ENCODE measurements at regions of chr4 and their contacts with region 1.

Region 1: GRCh38 chr4:102826890-102827673 is at the start of gene UBE2D3:
- DNase-seq: peak; percentile 92 to 97 (median 95)
- ATAC-seq: peak; percentile 72
- H3K4me3 ChIP-seq: peak within 1 kb of the TSS; percentile 82
- H3K4me3 Mint-ChIP-seq: no peak within 1 kb of the TSS
- H3K27ac ChIP-seq: peak within 1 kb of the TSS; percentile 99
- H3K27ac Mint-ChIP-seq: no peak within 1 kb of the TSS
- H3K4me1 ChIP-seq: peaks cover 19 to 24% of the 10 kb centered on the region in 2 donors
- H3K4me1 Mint-ChIP-seq: peaks cover 24 to 46% (median 40%) of the 10 kb centered on the region in 7 donors
- H3K27me3 ChIP-seq: no peaks in the 10 kb centered on the region
- H3K27me3 Mint-ChIP-seq: peaks cover 0 to 2% (median 0%) of the 10 kb centered on the region in 5 donors
- total RNA-seq, gene UBE2D3: 339 to 556 (median 413) TPM

Region 2: GRCh38 chr4:102430461-102430910 is 396.6 kb before region 1 on chr4:
- CTCF ChIA-PET with region 1: interaction called, 5 read pairs
- POLR2A ChIA-PET with region 1: interaction called, 8 read pairs
- intact Hi-C with region 1: loop called (anchors 1 to 2 kb)
- DNase-seq: no peak
- ATAC-seq: no peak
- H3K4me3 ChIP-seq: peak overlapping the region; percentile 72
- H3K4me3 Mint-ChIP-seq: peak overlapping the region; percentile 75 to 92 (median 88)
- H3K27ac ChIP-seq: peak overlapping the region; percentile 67
- H3K27ac Mint-ChIP-seq: peak overlapping the region in 8 of 9 donors; percentile 26 to 92 (median 80)
- H3K4me1 ChIP-seq: no peaks in the 10 kb centered on the region
- H3K4me1 Mint-ChIP-seq: peaks cover 0 to 19% (median 5%) of the 10 kb centered on the region in 7 donors
- H3K27me3 ChIP-seq: no peaks in the 10 kb centered on the region
- H3K27me3 Mint-ChIP-seq: peaks cover 0 to 16% (median 0%) of the 10 kb centered on the region in 5 donors

Region 3: DNA sequence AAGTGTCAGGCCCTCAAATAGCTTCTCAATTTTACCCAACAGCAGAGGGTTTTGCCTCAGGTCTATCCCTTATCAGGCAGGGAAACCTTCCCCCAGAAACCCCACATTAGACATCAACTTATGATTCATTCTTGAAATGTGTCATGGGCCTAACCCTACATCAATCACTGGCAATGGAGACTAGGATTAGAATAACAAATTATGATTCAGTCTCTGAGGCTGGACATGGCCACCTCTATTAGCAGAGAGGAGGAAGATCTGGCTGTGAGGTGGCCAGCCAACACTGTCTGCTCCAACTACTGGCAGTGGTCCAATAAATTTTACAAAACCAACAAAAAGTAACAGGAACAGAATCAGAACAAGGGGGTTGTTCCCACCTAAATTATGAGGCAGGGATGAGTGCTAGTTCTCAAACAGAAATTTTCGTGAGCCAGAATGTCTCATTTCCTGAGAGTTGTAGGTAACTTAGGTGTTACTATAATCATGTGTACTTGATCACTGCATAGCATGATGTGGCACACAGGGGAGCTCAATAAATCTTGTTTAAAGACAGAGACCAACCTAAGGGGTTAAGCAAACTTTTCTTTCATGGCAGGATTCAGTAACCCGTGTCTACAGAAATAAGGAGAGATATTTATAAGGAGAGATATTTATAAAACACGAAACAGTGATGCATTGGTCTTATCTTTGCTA is 199.1 kb before region 1 on chr4:
- CTCF ChIA-PET with region 1: interaction called, 5 read pairs
- POLR2A ChIA-PET with region 1: interaction called, 62 read pairs
- intact Hi-C with region 1: loop called in 1 of 2 experiments (anchors 1 kb)
- DNase-seq: no peak
- ATAC-seq: no peak
- H3K4me3 ChIP-seq: no peak overlapping the region
- H3K4me3 Mint-ChIP-seq: peak overlapping the region in 4 of 10 donors; percentile 16 to 92 (median 58)
- H3K27ac ChIP-seq: no peak overlapping the region
- H3K27ac Mint-ChIP-seq: peak overlapping the region in 7 of 9 donors; percentile 15 to 100 (median 87)
- H3K4me1 ChIP-seq: peaks cover 29 to 42% of the 10 kb centered on the region in 2 donors
- H3K4me1 Mint-ChIP-seq: peaks cover 29 to 91% (median 65%) of the 10 kb centered on the region in 7 donors
- H3K27me3 ChIP-seq: no peaks in the 10 kb centered on the region
- H3K27me3 Mint-ChIP-seq: no peaks in the 10 kb centered on the region

Region 4: DNA sequence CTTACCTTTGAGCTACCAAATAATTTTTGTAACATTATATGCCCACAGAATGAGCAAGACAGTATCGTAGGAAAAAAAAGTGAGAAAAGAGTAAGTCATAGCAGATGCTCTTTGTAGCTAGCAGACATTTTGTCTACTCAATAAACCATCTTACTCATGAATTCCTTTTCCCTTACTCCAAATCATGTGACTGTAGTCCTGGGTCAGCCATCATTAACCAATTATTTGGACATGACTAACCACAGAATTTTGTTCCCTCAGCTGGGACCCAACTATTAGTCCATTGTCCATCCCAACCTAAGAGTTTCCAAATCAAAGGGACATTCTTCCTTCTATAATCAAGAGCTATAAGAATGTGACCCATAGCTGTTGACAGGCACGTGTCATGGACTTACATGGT is 11.1 kb before region 1 on chr4:
- CTCF ChIA-PET with region 1: interaction called, 6 read pairs
- POLR2A ChIA-PET with region 1: interaction called, 80 read pairs
- intact Hi-C with region 1: loop called (anchors 1 kb)
- DNase-seq: no peak
- ATAC-seq: no peak
- H3K4me3 ChIP-seq: no peak overlapping the region
- H3K4me3 Mint-ChIP-seq: peak overlapping the region in 6 of 10 donors; percentile 39 to 79 (median 70)
- H3K27ac ChIP-seq: peak overlapping the region; percentile 9
- H3K27ac Mint-ChIP-seq: peak overlapping the region in 7 of 9 donors; percentile 61 to 84 (median 69)
- H3K4me1 ChIP-seq: peaks cover 77 to 81% of the 10 kb centered on the region in 2 donors
- H3K4me1 Mint-ChIP-seq: peaks cover 77 to 94% (median 91%) of the 10 kb centered on the region in 7 donors
- H3K27me3 ChIP-seq: no peaks in the 10 kb centered on the region
- H3K27me3 Mint-ChIP-seq: no peaks in the 10 kb centered on the region

Region 5: GRCh38 chr4:102901804-102902203 is 74.7 kb after region 1 on chr4:
- CTCF ChIA-PET with region 1: no interaction called
- POLR2A ChIA-PET with region 1: no interaction called
- intact Hi-C with region 1: no loop called
- DNase-seq: no peak
- ATAC-seq: no peak
- H3K4me3 ChIP-seq: no peak overlapping the region
- H3K4me3 Mint-ChIP-seq: no peak overlapping the region
- H3K27ac ChIP-seq: no peak overlapping the region
- H3K27ac Mint-ChIP-seq: no peak overlapping the region
- H3K4me1 ChIP-seq: no peaks in the 10 kb centered on the region
- H3K4me1 Mint-ChIP-seq: no peaks in the 10 kb centered on the region
- H3K27me3 ChIP-seq: no peaks in the 10 kb centered on the region
- H3K27me3 Mint-ChIP-seq: no peaks in the 10 kb centered on the region

Region 6: GRCh38 chr4:103008875-103009729 is 182.0 kb after region 1 on chr4:
- CTCF ChIA-PET with region 1: interaction called, 3 read pairs
- POLR2A ChIA-PET with region 1: interaction called, 3 read pairs
- intact Hi-C with region 1: loop called (anchors 1 to 2 kb)
- DNase-seq: peak in 7 of 9 donors; percentile 39 to 67 (median 56)
- ATAC-seq: peak; percentile 93
- H3K4me3 ChIP-seq: no peak overlapping the region
- H3K4me3 Mint-ChIP-seq: no peak overlapping the region
- H3K27ac ChIP-seq: no peak overlapping the region
- H3K27ac Mint-ChIP-seq: no peak overlapping the region
- H3K4me1 ChIP-seq: no peaks in the 10 kb centered on the region
- H3K4me1 Mint-ChIP-seq: peaks cover 0 to 3% (median 0%) of the 10 kb centered on the region in 7 donors
- H3K27me3 ChIP-seq: no peaks in the 10 kb centered on the region
- H3K27me3 Mint-ChIP-seq: peaks cover 0 to 14% (median 0%) of the 10 kb centered on the region in 5 donors

Region 7: GRCh38 chr4:103099691-103100392 is 272.8 kb after region 1 on chr4 and contains the start of gene BDH2:
- CTCF ChIA-PET with region 1: no interaction called
- POLR2A ChIA-PET with region 1: interaction called, 4 read pairs
- intact Hi-C with region 1: loop called (anchors 1 to 2 kb)
- DNase-seq: peak in 7 of 9 donors; percentile 72 to 86 (median 83)
- ATAC-seq: peak; percentile 100
- H3K4me3 ChIP-seq: peak within 1 kb of the TSS; percentile 62
- H3K4me3 Mint-ChIP-seq: peak within 1 kb of the TSS; percentile 88 to 100 (median 94)
- H3K27ac ChIP-seq: peak within 1 kb of the TSS; percentile 69
- H3K27ac Mint-ChIP-seq: peak within 1 kb of the TSS; percentile 81 to 95 (median 92)
- H3K4me1 ChIP-seq: peaks cover 4 to 11% of the 10 kb centered on the region in 2 donors
- H3K4me1 Mint-ChIP-seq: peaks cover 22 to 45% (median 34%) of the 10 kb centered on the region in 7 donors
- H3K27me3 ChIP-seq: no peaks in the 10 kb centered on the region
- H3K27me3 Mint-ChIP-seq: no peaks in the 10 kb centered on the region
- total RNA-seq, gene BDH2: 8.4 to 21.9 (median 18.5) TPM

Measured in naive thymus-derived CD4-positive, alpha-beta T cell (primary cell).